ENCODE measurements at regions of chr1 and their contacts with region 1.

Region 1: DNA sequence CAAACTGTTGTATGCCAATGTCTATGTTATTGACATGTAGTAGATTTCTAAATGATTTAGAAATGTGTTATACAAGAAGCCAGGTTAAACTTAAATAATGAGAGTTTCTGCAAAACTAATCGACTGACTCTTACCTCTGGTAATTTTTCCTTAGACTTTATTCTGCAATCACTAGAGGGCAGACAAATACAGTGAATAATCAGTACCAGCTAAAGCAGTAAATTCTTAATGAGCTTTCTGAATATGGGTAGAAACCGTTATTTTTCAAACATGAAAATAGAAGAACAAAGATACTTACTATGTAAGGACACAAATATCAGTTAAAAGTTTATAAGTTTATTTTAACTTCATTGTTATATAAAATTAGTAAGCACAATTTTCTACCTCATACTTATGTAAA is 97.9 kb upstream of the RGS1 start:
- DNase-seq: no peak
- ATAC-seq: peak; percentile 74

Region 2: DNA sequence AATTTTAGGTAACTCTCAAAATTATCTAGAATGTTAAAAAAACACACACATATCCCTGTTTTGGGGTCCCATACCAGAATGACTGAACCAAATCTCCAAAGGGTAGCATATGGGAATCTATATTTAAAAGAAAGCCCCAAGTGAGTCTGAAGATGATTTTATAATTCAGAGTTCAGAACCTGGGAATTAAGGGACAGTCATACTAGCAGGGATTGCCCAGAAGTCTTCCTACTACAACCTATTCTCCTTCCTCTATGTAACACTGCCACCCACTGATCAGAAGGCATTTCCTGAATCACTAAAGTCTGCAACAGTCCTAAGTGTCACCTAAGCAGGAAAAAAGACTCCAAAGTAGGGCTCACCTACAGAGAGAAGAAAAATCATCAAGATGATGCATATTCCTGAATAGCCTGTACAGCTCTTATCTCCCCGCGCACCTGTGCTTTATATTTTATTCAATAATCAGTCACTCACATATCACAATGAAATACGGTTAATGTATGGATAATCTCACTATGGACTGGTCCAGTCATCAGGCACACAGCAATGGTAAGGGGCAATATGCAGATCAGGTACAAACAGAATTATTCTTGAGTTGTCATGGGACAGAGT is 102.8 kb after region 1 on chr1:
- intact Hi-C with region 1: loop called (anchors 2 kb)
- DNase-seq: no peak
- ATAC-seq: peak; percentile 72

Region 3: GRCh38 chr1:192609110-192610079 is 131.8 kb after region 1 on chr1:
- intact Hi-C with region 1: loop called (anchors 1 kb)
- DNase-seq: peak; percentile 84
- ATAC-seq: peak; percentile 57

Region 4: DNA sequence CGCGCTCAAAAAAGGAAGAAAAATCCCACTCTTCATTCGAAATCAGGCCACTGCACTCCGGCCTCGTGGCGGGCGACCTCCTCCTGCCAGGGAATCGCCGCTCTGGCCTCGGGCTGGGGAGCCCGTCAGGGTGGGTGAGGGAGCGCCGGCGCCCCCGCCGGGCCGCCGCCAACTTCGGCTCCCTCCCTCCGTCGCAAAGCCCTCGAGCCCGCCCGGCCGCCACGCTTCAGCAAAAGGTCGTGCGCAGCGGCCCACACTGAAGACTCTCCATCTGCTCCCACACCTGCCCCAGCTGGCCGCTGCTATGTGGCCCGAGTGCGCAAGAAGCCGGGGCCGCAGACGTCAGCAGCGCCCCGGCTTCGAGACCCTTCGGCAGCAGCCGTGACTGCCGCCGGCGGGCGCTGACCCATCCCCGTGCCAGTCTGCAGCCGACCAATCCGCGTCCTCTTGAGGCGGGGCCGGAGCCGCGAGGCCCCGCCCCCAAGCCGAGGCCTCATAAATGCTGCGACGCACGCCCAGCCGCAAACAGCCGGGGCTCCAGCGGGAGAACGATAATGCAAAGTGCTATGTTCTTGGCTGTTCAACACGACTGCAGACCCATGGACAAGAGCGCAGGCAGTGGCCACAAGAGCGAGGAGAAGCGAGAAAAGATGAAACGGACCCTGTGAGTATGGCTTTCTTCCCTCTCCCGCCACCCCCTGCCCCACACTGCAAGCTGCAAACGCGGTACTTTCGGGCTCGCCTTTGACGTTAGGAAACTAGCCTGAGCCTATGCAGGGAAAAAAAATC is 331.1 kb after region 1 on chr1 and contains the start of gene RGS2:
- intact Hi-C with region 1: loop called (anchors 2 kb)
- DNase-seq: peak; percentile 96
- ATAC-seq: peak; percentile 98
- total RNA-seq, gene RGS2: 19.4 TPM

Region 5: DNA sequence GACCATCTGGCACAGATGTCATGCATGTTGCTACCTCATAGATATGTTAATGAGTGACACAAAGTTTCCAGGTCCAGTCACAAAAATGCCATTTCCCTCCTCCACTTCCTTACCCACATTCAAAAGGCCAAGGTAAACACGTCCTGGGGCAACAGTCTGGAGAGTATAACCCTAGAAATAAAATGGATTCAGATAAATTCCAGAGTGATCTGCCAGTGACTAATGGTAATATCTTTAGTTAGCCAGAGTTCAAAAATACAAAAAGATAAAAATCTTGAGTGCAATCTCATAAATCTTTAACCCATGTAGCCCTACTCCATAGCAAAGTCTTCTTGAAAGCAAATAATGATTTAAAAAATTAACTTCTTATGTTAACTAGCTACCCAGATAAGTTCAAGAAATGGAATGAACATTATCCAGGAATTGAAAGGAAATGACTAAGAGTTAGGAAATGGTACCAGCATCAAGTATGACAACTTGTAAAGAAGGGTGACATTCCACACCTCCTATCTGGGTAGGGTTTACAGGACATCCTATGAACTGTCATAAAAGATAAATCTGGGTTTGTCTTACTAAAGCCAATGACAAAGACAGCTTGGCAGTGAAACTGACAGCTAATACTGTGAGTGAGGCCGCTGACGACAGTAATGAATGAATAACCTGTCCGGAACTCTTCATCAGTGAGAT is 349.3 kb after region 1 on chr1:
- intact Hi-C with region 1: no loop called
- DNase-seq: no peak
- ATAC-seq: no peak

Region 6: DNA sequence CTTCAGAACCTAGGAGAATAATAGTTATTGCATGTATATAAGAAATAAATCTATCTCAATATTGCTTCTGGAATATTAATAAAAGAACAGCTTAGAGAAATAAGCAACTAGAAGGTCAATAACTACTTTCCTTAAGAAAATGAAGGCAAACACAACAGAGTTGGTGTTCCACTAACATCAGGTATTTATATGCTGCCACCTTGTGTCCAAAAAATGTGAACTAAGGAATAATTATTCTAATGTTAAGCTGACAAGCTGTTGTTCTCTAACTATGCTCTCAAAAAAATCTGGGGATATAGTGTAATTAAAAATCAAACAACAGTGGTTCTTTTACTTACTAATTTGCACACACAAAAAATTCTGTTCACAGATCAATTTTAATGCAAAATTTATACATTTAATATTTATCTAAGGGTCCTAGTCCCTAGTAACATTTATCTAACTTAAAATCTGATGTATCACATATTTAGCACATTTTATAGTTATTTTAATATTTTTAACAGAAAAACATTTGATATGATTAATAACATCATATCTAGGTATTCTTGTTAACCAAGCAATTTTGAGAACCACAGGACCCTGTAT is 541.9 kb after region 1 on chr1:
- intact Hi-C with region 1: loop called (anchors 2 kb)
- DNase-seq: no peak
- ATAC-seq: no peak

Region 7: GRCh38 chr1:193121616-193122593 is 644.3 kb after region 1 on chr1 and contains the start of gene CDC73:
- intact Hi-C with region 1: loop called (anchors 5 kb)
- DNase-seq: peak; percentile 99
- ATAC-seq: peak; percentile 100
- total RNA-seq, gene CDC73: 48.6 TPM